A673 (cell line): ENCODE measurements at regions of chr19 and their contacts with region 1.

Region 1: DNA sequence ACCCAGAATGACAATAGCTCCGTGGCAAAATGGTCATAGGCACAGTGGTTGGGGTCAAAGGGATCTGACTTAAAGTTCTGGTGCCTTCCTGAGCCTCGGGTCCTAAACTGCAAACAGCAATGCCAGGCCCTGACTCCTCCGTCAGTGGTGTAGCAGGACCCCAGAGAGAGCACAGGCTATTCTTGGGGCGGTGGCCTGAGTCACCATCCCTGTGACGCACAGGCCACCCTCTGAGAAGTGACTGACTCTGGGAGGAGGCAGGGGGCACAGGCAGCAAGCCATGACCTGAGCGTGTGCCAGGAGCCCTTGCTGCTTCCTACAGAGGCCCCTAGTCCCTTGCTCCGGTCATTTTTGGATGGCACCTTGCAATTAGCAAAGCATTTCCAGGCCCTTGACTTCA is 18.7 kb downstream of the PLVAP start:
- DNase-seq: no peak
- H3K4me3 ChIP-seq: no peak overlapping the region
- H3K27ac ChIP-seq: no peak overlapping the region
- H3K4me1 ChIP-seq: no peaks in the 10 kb centered on the region
- H3K27me3 ChIP-seq: no peaks in the 10 kb centered on the region
- CTCF ChIP-seq: no peak

Region 2: DNA sequence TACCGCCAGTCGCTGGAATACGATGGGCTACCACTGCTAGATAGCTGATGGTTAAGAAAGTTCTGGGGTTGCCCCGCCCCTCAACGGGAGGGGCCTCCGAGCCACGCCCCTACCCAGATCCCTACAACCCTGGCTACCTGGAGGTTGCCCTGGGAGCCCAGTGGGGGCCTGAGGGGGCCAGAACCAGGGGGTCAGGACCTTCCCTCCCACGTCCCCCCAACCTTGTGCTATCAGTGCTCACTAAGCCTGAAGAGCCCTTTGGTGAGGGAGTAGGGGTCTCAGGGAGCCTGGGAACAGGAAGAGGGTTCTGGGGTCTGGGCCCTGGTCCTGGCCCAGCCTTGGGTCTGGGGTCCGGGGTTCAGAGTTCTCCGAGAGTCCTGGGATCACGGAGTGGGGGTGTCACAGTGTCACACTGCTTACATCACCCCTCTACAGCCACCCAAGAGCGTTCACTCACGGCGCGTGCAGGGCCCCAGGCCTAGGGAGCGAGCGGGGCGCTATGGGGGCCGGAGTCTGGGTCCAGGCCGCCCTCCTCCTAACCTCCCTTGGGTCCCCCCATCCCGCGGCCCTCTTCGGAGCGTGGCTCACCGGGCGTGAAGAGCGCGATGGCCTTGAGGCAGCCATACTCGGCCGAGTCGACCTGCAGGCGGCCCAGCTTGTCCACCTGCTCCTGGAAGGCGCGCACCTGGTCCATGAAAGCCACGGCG is 123.3 kb before region 1 on chr19:
- CTCF ChIA-PET with region 1: no interaction called
- POLR2A ChIA-PET with region 1: interaction called, 14 read pairs
- intact Hi-C with region 1: no loop called
- DNase-seq: peak; percentile 69
- H3K4me3 ChIP-seq: peak overlapping the region; percentile 74
- H3K27ac ChIP-seq: peak overlapping the region; percentile 88
- H3K4me1 ChIP-seq: peaks cover 19% of the 10 kb centered on the region
- H3K27me3 ChIP-seq: no peaks in the 10 kb centered on the region
- CTCF ChIP-seq: no peak

Region 3: GRCh38 chr19:17530586-17530985 is 172.2 kb after region 1 on chr19:
- CTCF ChIA-PET with region 1: no interaction called
- POLR2A ChIA-PET with region 1: no interaction called
- intact Hi-C with region 1: no loop called
- DNase-seq: no peak
- H3K4me3 ChIP-seq: no peak overlapping the region
- H3K27ac ChIP-seq: no peak overlapping the region
- H3K4me1 ChIP-seq: peaks cover 8% of the 10 kb centered on the region
- H3K27me3 ChIP-seq: no peaks in the 10 kb centered on the region
- CTCF ChIP-seq: no peak